HEK293 (cell line): ENCODE measurements at regions of chr6 and their contacts with region 1.

Region 1: DNA sequence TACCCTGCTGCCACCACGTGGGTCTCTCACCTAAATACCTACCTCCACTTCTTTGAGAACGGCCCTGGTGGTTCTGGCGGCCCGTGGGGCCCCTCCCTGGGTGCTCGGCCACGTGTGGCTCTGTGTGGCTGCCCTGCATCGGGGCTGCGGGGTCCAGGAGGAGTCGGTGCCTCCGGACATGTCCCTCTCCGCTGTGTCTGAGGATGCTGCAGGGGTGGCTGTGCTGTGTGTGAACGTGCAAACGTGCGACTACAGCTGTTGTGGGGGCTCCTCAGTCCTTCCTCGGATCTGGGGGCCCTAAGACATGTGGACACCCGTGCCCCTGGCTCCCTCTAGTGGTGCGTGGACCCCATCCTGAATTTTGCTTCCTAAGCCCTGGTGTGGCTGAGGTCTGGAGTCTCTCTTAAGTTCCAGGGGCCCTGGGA is 691.8 kb downstream of the QKI start:
- H3K4me3 ChIP-seq: no peak overlapping the region
- H3K27ac ChIP-seq: no peak overlapping the region
- H3K4me1 ChIP-seq: no peaks in the 10 kb centered on the region
- CTCF ChIP-seq: 0 out of 2 replicates have a peak, but pooled peaks have one; percentile 17

Region 2: DNA sequence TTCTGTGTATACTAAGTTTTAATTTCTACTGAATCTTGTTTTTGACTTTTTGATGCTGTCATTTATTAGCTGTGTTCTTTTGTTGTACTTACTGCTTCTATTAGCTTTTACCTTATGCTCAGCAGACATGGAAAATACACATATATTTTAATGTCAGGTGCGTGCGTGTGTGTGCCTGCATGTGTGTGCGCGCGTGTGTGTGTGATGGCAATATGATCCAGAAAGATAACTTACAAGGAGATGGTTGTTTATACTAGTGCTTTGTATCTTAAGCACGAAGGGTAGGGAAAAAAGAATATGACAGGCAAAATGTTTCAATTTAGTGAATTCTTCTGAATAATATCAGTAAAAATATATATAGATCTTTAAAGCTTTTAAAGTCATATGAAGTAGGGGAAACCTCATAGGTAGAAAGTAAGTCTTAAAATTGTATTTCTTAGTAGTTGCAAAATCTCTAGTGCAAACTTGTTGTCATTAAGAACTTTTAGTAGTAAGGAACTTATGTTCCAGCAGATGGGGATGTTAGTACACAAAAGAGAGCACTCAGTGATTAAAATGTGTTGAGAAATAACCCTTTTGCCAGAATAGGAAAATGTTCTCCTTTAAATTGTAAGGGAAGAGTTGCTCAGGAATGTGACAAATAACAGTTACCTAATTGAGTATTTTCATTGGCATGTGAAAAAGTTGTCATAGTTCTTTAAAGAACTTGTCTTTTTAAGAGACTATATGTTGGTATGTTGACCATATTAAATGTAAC is 678.7 kb before region 1 on chr6:
- CTCF ChIA-PET with region 1: interaction called, 19 read pairs
- POLR2A ChIA-PET with region 1: no interaction called
- H3K4me3 ChIP-seq: no peak overlapping the region
- H3K27ac ChIP-seq: no peak overlapping the region
- H3K4me1 ChIP-seq: peaks cover 13% of the 10 kb centered on the region
- CTCF ChIP-seq: peak; percentile 56

Region 3: DNA sequence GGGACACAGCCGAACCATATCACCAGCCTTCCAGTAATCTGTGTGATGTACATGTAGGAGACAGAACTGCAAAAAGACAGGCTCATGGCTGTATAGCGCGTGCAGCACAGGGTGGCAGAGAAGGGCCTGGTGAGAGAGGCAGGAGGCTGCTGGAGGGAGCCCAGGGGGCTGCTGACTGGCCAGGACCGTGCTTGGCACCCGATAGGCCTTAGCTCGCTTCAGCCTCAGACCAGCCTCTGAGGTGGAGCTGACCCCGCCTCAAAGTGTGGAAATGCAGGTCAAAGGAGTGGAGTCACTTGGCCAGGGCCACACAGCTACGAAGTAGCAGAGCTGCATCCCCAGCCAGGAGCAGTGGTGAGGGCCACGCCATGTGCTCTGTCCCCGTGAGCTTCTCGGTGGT is 15.8 kb after region 1 on chr6:
- CTCF ChIA-PET with region 1: interaction called, 23 read pairs
- POLR2A ChIA-PET with region 1: no interaction called
- H3K4me3 ChIP-seq: no peak overlapping the region
- H3K27ac ChIP-seq: no peak overlapping the region
- H3K4me1 ChIP-seq: no peaks in the 10 kb centered on the region
- CTCF ChIP-seq: no peak